ENCODE measurements at regions of chr13 and their contacts with region 1.

Region 1: DNA sequence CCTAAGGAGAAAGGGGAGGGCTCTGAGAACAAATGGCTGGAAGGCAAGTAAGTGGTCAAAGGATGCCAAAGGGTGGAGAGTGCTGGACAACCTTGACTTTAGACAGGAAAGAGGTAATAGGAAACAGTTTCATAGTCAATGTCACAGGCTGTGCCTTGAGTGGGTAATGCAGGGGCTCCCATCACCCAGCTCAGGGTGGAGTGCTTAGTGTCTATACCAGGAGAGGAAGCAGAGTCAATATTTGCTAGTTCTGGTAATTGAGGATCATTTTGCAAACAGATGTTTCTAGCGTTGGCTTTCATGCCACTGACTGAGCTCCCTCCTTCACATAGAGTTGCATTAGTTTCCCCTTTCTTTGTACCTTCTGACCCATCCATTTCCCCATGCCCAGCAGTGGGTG is 64.6 kb upstream of the KL start:
- DNase-seq: no peak

Region 2: DNA sequence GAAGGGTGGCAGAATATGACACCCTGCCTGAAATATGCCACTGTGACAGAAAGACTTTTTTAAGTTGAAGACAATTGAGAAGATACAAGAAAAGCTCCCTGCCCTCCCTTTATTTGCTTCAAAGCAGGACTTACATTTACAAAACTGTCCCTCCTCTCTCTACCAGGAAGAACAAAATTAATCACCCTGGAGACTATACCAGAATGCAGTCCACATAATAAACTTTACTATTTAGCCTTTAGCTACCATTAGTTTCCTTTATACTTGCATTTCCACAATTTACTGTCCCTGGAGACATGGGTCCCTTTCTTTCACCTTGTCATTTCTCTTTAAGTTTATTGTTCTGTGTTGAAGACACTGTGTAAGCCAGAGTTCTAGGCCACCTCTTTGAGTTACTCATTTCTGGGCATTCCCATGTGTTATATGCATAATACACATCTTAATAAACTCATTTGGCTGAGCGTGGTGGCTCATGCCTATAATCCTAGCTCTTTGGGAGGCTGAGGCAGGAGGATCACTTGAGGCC is 1105.2 kb after region 1 on chr13:
- intact Hi-C with region 1: loop called in 1 of 2 experiments (anchors 5 kb)
- DNase-seq: no peak

Measured in posterior vena cava (tissue), 2 donors.